Right ventricle myocardium superior (tissue), 1 donor: ENCODE measurements at regions of chr5 and their contacts with region 1.

Region 1: GRCh38 chr5:151740336-151740942 is 18.0 kb downstream of the ATOX1 start:
- DNase-seq: peak; percentile 73
- ATAC-seq: peak; percentile 80

Region 2: DNA sequence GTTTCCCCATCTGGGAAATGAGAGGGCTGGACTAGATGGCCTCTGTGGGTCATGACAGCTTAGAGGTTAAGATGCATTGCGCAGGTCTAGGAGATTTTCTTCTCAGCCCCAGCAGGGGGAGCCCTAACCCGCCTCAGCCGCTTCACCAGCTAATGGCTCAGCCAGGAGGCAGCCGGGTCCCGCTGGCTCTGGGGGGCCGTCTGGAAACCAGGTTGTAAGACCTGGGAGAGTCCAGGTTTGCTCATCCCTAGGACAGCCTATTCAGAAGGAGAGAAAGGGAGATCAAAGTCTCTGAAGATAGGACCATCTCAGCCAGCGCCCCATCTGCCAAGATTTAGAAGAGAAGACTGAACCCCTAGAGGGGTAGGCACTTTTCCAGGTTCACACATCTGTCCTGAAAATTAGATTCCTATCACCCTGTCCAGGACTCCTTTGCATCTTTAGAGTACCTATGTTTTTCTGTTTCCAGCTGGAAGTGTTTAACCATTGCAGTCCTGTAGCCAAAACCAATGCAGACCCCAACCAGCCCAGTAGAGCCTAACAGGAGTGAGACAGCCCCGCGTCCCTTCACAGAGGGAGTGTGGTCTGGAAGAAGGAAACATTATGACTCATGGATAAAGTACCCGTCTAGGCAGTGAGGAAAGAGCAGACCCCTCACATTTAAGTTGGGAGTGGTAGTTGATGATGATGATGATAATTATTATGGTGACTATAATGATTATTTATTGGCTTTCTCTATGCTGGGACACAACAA is 81.3 kb before region 1 on chr5:
- intact Hi-C with region 1: loop called (anchors 2 kb)
- DNase-seq: peak; percentile 84
- ATAC-seq: peak; percentile 88